ENCODE measurements at regions of chr1 and their contacts with region 1.

Region 1: GRCh38 chr1:89065079-89065868 is at the start of gene GBP1:
- DNase-seq: no peak
- ATAC-seq: peak; percentile 77
- H3K4me3 Mint-ChIP-seq: peak within 1 kb of the TSS; percentile 97
- H3K27ac Mint-ChIP-seq: peak within 1 kb of the TSS; percentile 92
- H3K4me1 Mint-ChIP-seq: peaks cover 57% of the 10 kb centered on the region
- H3K27me3 Mint-ChIP-seq: no peaks in the 10 kb centered on the region
- CTCF ChIP-seq: no peak
- total RNA-seq, gene GBP1: 69.6 to 71.5 TPM

Region 2: GRCh38 chr1:88983791-88984559 is 81.3 kb before region 1 on chr1:
- CTCF ChIA-PET with region 1: interaction called, 19 read pairs
- POLR2A ChIA-PET with region 1: interaction called, 3 read pairs
- intact Hi-C with region 1: no loop called
- DNase-seq: peak; percentile 48
- ATAC-seq: peak; percentile 63
- H3K4me3 Mint-ChIP-seq: peak overlapping the region; percentile 6
- H3K27ac Mint-ChIP-seq: peak overlapping the region; percentile 87
- H3K4me1 Mint-ChIP-seq: peaks cover 86% of the 10 kb centered on the region
- H3K27me3 Mint-ChIP-seq: no peaks in the 10 kb centered on the region
- CTCF ChIP-seq: peak; percentile 77

Region 3: GRCh38 chr1:89041119-89041641 is 24.1 kb before region 1 on chr1:
- CTCF ChIA-PET with region 1: interaction called, 4 read pairs
- POLR2A ChIA-PET with region 1: interaction called, 12 read pairs
- intact Hi-C with region 1: no loop called
- DNase-seq: peak; percentile 43
- ATAC-seq: peak; percentile 88
- H3K4me3 Mint-ChIP-seq: peak overlapping the region; percentile 51
- H3K27ac Mint-ChIP-seq: peak overlapping the region; percentile 88
- H3K4me1 Mint-ChIP-seq: peaks cover 43% of the 10 kb centered on the region
- H3K27me3 Mint-ChIP-seq: peaks cover 2% of the 10 kb centered on the region
- CTCF ChIP-seq: no peak

Region 4: DNA sequence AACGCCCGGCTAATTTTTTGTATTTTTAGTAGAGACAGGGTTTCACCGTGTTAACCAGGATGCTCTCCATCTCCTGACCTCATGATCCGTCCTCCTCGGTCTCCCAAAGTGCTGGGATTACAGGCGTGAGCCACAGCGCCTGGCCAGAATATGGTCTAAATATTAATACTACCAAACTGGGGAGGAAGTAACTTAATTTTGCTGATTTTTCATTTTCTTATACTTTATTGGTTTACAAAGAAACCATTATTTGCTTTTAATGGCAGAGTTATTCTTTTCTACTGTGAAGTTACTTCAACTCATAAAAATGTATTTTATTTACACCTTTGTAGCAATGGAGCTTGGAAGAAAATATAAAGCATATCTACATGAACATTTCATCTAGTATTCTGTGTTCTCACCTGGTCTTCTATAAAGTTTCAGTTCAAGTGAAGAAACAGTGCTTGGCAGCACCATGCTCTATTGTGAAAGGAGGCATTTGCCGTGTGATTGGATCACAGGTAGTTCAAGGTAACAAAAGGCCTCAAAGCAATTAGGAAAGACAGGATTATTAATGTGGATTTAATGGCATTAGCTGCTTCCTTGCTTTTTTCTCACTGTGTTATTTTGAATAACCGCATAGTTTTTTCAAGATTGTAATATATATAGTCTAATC is 13.8 kb before region 1 on chr1:
- CTCF ChIA-PET with region 1: interaction called, 4 read pairs
- POLR2A ChIA-PET with region 1: interaction called, 20 read pairs
- intact Hi-C with region 1: no loop called
- DNase-seq: no peak
- ATAC-seq: no peak
- H3K4me3 Mint-ChIP-seq: no peak overlapping the region
- H3K27ac Mint-ChIP-seq: no peak overlapping the region
- H3K4me1 Mint-ChIP-seq: peaks cover 14% of the 10 kb centered on the region
- H3K27me3 Mint-ChIP-seq: no peaks in the 10 kb centered on the region
- CTCF ChIP-seq: no peak

Measured in activated CD8-positive, alpha-beta T cell treated with anti-CD3 and anti-CD28 coated beads for 36 hours (primary cell).